Left colon (tissue), 2 donors: ENCODE measurements at regions of chr1 and their contacts with region 1.

Region 1: GRCh38 chr1:75265792-75266191 is 131.6 kb downstream of the LHX8 start:
- DNase-seq: no peak
- ATAC-seq: peak; percentile 34

Region 2: DNA sequence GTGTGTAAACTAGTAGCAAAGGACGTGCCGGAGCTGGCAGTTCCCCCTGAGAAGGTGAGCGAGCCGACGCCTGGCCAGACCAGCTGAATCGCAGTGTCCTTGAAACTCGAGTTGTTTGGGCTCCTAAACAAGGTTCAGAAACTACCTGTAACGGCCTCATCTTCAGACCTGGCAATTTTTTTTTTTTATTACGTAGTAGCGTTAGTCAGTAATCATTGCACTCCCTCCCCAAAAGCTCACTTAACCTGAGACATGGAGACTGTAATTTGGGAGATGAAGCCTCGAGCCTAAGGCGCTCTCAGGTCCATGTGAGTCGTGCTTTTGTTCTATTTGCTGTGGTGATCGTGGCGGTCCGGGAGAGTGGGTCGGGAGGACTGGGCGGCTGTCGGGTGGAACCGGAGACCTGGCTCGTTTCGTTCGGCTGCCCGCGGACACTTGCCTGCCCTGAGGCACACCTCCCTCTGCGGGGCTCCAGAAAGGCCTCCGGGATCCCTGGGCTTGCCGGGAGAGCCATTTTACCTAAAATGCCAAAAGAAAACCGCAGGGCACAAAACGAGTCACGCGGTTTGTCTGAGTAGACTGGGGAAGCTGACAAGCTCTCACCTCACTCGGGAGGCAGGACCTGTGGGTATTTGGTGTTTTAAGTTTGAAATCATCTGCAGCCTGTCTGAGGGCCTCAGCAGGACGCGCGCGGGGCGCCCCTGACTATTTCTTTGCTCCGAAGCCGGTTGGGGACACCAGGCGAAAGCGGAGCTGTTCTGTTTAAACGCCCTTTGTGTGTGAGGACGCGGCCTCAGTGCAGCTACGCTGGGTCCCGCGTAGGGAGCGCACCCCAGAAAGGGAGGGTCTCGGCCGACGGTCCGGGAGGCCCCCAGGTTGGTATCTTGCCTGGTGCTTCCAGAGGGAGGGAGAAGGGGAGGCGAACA is 130.9 kb before region 1 on chr1:
- intact Hi-C with region 1: no loop called
- DNase-seq: no peak
- ATAC-seq: no peak

Region 3: GRCh38 chr1:75310067-75310466 is 44.3 kb after region 1 on chr1:
- intact Hi-C with region 1: no loop called
- DNase-seq: no peak
- ATAC-seq: no peak

Region 4: DNA sequence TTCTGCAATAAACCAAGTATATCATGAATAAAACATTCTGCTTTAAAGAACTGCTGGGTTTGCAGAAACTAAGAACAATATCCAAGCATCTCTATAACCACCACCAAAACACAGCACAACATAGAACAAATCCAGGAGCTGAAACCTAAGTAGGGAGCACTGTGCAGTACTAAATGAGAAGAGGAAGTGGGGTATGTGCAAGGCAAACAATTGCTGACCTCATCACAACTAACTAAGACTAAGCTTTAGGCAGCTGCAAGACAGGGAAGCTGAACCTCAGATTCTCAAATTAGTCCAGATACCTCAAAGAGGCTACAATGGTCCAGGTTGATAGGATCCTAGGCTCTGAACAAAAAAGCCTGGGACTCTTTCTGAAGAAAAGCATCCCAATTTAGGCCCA is 172.6 kb after region 1 on chr1:
- intact Hi-C with region 1: no loop called
- DNase-seq: no peak
- ATAC-seq: no peak

Region 5: DNA sequence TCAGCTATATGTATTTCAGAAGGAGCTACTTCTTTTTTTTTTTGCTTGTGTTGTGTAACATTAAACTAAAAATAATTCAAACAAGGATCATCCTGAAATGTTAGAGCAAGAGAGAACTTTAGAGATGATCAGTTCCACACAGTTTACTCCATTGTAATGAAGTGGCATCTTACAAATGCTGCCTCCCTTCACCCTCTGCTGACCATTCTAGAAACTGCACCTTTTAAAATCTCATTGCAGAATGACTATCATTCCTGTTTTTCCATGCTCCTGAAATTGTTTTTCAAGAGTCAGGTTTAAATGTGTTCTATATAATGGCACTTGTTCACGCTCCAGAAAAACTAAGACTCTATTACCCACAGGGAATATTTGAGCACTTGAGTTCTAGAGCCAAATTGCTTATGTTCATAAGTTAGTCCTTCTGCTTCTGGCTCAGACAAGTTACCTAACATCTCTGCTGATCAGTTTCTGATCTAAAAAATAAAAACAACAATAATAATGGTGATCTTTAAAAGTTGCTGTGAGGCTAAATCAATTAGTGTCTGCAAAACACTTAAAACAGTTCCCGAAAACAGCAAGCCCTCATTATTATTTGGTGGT is 366.7 kb after region 1 on chr1:
- intact Hi-C with region 1: loop called in 1 of 2 experiments (anchors 10 kb)
- DNase-seq: no peak
- ATAC-seq: peak; percentile 52